B cell (primary cell): ENCODE measurements at regions of chr12 and their contacts with region 1.

Region 1: DNA sequence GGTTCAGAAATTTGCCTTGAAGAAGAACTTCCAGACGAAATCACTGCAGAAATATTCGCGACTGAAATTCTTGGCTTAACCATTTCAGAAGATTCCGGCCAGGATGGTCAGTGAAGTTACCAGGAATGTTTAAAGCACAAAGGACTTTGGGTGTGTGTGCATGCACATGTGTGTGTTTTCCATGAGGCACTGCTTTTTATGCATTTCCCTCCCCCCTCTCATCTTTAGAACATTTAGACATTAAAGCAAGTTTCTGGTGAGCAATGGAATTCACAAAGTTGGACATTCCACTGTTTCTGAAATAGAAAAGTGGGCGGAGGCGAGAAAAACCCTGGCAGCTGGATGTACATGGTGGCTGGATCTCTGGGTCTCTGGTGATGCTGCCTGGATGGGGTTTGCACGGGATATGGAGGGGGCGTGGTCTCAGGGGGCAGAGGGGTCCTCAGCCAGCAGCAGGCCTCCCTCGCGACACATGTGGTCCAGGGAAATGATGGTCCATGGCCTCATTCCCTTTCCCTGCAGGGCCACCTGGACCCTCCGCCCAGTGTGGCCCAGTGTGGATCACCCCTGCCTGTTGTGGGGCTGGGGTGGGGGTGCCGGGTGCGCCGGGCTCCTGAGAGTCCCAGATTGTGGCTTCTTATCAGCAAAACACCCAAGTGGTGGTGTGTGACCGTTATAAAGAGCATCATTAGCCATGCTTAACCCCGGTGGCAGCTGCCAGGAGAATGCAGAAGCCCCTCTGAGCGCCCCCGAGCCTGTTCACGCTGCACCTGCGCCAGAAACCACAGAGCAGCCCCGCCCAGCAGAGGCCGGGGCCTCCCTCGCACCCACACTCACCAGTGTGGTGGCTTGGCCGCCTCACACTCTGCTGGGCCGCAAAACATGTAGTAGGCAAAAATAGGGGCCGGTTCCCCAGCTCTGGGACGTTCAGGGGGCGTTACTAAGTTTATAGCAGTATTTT is 17.8 kb upstream of the BCL7A start:
- DNase-seq: peak; percentile 89
- ATAC-seq: peak; percentile 87
- H3K4me3 ChIP-seq: peak overlapping the region in 2 of 5 experiments; percentile 26 to 44
- H3K4me3 Mint-ChIP-seq: peak overlapping the region; percentile 79
- H3K27ac ChIP-seq: peak overlapping the region; percentile 77 to 80
- H3K27ac Mint-ChIP-seq: peak overlapping the region; percentile 93
- H3K4me1 ChIP-seq: peaks cover 68 to 75% of the 10 kb centered on the region in 2 donors
- H3K4me1 Mint-ChIP-seq: peaks cover 75% of the 10 kb centered on the region
- H3K27me3 ChIP-seq: no peaks in the 10 kb centered on the region
- H3K27me3 Mint-ChIP-seq: no peaks in the 10 kb centered on the region
- CTCF ChIP-seq: no peak

Region 2: DNA sequence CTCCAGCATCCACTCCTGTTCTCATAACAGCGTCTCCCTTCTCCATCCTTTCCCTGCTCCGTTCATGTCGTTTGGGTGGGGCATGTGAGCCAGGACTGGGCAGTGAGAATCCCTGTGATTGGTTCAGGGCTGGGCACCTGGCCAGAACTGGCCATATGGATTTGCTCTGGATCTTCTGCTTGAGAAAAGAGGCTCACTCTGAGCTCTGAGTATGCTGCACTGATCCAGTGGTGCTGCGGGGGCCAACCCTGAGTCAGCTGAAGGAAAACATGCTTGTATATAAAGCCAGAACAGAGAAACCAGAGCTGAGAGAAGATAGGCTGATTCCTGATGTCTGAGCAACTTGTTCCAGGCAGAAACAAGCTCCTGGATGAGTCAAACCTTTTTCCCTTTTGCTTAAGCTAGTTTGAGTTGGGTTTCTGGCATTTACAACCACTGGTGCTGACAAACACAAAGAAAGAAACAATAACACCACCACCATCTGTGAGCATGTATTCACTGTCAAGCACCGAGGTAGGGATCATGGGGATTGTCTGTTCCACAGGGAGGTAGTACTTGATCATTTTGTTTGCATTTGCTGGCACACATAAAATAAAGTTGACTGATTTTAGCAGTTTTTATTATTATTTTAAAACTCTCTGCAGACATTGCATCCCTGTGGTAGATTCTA is 131.2 kb before region 1 on chr12:
- CTCF ChIA-PET with region 1: no interaction called
- POLR2A ChIA-PET with region 1: no interaction called
- intact Hi-C with region 1: no loop called
- DNase-seq: no peak
- ATAC-seq: no peak
- H3K4me3 ChIP-seq: no peak overlapping the region
- H3K4me3 Mint-ChIP-seq: no peak overlapping the region
- H3K27ac ChIP-seq: no peak overlapping the region
- H3K27ac Mint-ChIP-seq: no peak overlapping the region
- H3K4me1 ChIP-seq: peaks cover 0 to 5% of the 10 kb centered on the region in 2 donors
- H3K4me1 Mint-ChIP-seq: peaks cover 3% of the 10 kb centered on the region
- H3K27me3 ChIP-seq: no peaks in the 10 kb centered on the region
- H3K27me3 Mint-ChIP-seq: no peaks in the 10 kb centered on the region
- CTCF ChIP-seq: no peak

Region 3: DNA sequence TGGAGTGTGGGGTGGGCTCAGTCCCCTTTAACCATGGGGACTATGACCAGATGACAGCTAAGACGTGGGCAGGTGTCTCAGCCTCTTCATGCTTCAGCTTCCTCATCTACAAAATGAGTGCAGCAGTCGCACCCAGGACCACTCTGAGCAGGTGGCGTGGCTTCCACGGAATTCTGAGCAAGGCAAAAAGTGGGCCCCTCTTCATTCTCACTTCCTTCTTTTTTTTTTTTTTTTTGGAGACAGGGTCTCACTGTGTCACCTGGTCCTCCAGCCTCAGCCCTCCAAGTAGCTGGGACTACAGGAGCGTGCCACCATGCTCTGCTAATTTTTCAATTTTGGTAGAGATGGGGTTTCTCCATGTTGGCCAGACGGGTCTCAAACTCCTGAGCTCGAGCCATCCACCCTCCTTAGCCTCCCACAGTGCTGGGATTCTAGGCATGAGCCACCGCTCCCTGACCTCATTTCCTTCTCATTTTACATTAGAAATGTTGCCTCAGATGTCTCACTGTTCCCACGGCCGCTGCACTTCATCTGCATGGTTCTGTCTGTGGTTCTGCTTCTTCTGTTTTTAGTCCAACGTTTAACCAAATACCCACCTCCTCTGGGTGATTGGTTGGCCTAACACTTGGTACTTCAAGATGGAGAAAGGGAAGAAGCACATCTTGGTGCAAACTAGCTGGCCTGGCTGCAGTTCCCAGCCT is 23.6 kb before region 1 on chr12:
- CTCF ChIA-PET with region 1: interaction called, 12 read pairs
- POLR2A ChIA-PET with region 1: interaction called, 13 read pairs
- intact Hi-C with region 1: loop called (anchors 1 kb)
- DNase-seq: peak; percentile 85
- ATAC-seq: peak; percentile 74
- H3K4me3 ChIP-seq: peak overlapping the region in 4 of 5 experiments; percentile 2 to 39 (median 12)
- H3K4me3 Mint-ChIP-seq: peak overlapping the region; percentile 81
- H3K27ac ChIP-seq: peak overlapping the region; percentile 63 to 81
- H3K27ac Mint-ChIP-seq: peak overlapping the region; percentile 95
- H3K4me1 ChIP-seq: peaks cover 53 to 64% of the 10 kb centered on the region in 2 donors
- H3K4me1 Mint-ChIP-seq: peaks cover 55% of the 10 kb centered on the region
- H3K27me3 ChIP-seq: no peaks in the 10 kb centered on the region
- H3K27me3 Mint-ChIP-seq: no peaks in the 10 kb centered on the region
- CTCF ChIP-seq: no peak

Region 4: DNA sequence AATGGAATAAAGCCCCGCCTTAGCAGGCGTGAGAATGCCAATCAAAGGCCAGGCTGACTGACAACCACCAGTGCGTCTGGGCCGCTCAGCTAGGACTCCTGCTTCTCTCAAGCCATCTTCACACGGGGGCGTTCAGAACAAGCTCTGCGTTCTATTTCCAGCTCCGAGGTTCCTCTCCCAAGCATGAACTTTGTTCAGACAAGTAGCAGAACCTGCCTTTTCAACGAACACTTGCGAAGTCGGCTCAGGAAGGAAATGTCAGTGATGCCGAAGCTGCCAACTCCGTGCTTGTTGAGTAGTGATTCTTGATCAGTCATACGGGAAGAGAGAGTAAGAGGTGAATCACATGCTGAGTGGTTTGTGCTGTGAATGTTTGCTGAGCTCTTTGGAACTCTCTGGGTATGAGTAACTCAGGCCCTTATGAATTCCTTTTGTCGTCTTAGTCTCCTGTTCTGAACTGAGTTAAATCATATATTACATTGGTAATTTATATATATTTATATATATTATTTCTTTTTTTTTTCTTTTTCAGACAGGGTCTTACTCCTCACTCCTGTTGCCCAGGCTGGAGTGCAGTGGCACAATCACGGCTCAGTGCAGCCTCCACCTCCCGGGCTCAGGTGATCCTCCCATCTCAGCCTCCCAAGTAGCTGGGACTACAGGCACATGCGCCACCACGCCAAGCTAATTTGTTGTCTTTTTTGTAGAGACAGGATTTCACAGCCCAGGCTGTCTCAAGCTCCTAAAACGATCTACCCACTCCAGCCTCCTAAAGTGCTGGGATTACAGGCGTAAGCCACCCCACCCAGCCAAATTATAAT is 11.7 kb before region 1 on chr12:
- CTCF ChIA-PET with region 1: interaction called, 8 read pairs
- POLR2A ChIA-PET with region 1: interaction called, 11 read pairs
- intact Hi-C with region 1: loop called (anchors 1 kb)
- DNase-seq: peak; percentile 86
- ATAC-seq: peak; percentile 89
- H3K4me3 ChIP-seq: peak overlapping the region in 1 of 5 experiments; percentile 9
- H3K4me3 Mint-ChIP-seq: peak overlapping the region; percentile 84
- H3K27ac ChIP-seq: peak overlapping the region; percentile 62 to 70
- H3K27ac Mint-ChIP-seq: peak overlapping the region; percentile 96
- H3K4me1 ChIP-seq: peaks cover 38% of the 10 kb centered on the region in 2 donors
- H3K4me1 Mint-ChIP-seq: peaks cover 44% of the 10 kb centered on the region
- H3K27me3 ChIP-seq: no peaks in the 10 kb centered on the region
- H3K27me3 Mint-ChIP-seq: no peaks in the 10 kb centered on the region
- CTCF ChIP-seq: no peak

Region 5: GRCh38 chr12:122021822-122022526 is 18.0 kb after region 1 on chr12 and contains the start of gene BCL7A:
- CTCF ChIA-PET with region 1: interaction called, 24 read pairs
- POLR2A ChIA-PET with region 1: interaction called, 48 read pairs
- intact Hi-C with region 1: loop called (anchors 1 kb)
- DNase-seq: peak; percentile 90
- ATAC-seq: peak; percentile 73
- H3K4me3 ChIP-seq: peak within 1 kb of the TSS; percentile 26 to 86 (median 78)
- H3K4me3 Mint-ChIP-seq: peak within 1 kb of the TSS; percentile 94
- H3K27ac ChIP-seq: peak within 1 kb of the TSS; percentile 67 to 80
- H3K27ac Mint-ChIP-seq: peak within 1 kb of the TSS; percentile 98
- H3K4me1 ChIP-seq: peaks cover 32 to 51% of the 10 kb centered on the region in 2 donors
- H3K4me1 Mint-ChIP-seq: peaks cover 38% of the 10 kb centered on the region
- H3K27me3 ChIP-seq: no peaks in the 10 kb centered on the region
- H3K27me3 Mint-ChIP-seq: no peaks in the 10 kb centered on the region
- CTCF ChIP-seq: no peak
- total RNA-seq, gene BCL7A: 75.6 and 75.9 TPM in 2 replicates

Region 6: GRCh38 chr12:122031342-122032216 is 27.6 kb after region 1 on chr12:
- CTCF ChIA-PET with region 1: interaction called, 11 read pairs
- POLR2A ChIA-PET with region 1: interaction called, 48 read pairs
- intact Hi-C with region 1: no loop called
- DNase-seq: peak; percentile 70
- ATAC-seq: peak; percentile 39
- H3K4me3 ChIP-seq: no peak overlapping the region
- H3K4me3 Mint-ChIP-seq: peak overlapping the region; percentile 29
- H3K27ac ChIP-seq: peak overlapping the region; percentile 18 to 70
- H3K27ac Mint-ChIP-seq: peak overlapping the region; percentile 71
- H3K4me1 ChIP-seq: peaks cover 51 to 67% of the 10 kb centered on the region in 2 donors
- H3K4me1 Mint-ChIP-seq: peaks cover 61% of the 10 kb centered on the region
- H3K27me3 ChIP-seq: no peaks in the 10 kb centered on the region
- H3K27me3 Mint-ChIP-seq: no peaks in the 10 kb centered on the region
- CTCF ChIP-seq: peak; percentile 81

Region 7: DNA sequence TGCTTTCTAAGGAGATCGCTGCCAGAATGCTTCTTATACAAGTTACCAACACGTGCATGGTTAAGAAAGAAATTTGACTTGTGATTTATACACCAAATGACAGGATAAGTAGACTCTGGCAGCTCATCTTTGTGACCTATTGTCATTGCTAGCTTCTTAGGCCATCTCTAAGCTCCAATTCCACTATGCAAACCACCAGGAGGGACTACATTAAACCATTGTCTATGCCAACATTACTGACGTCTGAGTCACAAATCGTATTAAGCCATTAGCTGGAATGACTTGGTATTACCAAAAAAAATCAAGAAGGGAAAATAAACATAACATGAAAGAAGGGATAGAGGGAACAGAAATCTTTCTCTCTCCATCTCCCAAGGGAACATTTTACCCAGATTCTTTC is 278.1 kb after region 1 on chr12:
- CTCF ChIA-PET with region 1: no interaction called
- POLR2A ChIA-PET with region 1: no interaction called
- intact Hi-C with region 1: no loop called
- DNase-seq: no peak
- ATAC-seq: no peak
- H3K4me3 ChIP-seq: no peak overlapping the region
- H3K4me3 Mint-ChIP-seq: no peak overlapping the region
- H3K27ac ChIP-seq: no peak overlapping the region
- H3K27ac Mint-ChIP-seq: no peak overlapping the region
- H3K4me1 ChIP-seq: no peaks in the 10 kb centered on the region
- H3K4me1 Mint-ChIP-seq: no peaks in the 10 kb centered on the region
- H3K27me3 ChIP-seq: no peaks in the 10 kb centered on the region
- H3K27me3 Mint-ChIP-seq: no peaks in the 10 kb centered on the region
- CTCF ChIP-seq: no peak